CD4-positive, alpha-beta T cell (primary cell): ENCODE measurements at regions of chr11 and their contacts with region 1.

Region 1: DNA sequence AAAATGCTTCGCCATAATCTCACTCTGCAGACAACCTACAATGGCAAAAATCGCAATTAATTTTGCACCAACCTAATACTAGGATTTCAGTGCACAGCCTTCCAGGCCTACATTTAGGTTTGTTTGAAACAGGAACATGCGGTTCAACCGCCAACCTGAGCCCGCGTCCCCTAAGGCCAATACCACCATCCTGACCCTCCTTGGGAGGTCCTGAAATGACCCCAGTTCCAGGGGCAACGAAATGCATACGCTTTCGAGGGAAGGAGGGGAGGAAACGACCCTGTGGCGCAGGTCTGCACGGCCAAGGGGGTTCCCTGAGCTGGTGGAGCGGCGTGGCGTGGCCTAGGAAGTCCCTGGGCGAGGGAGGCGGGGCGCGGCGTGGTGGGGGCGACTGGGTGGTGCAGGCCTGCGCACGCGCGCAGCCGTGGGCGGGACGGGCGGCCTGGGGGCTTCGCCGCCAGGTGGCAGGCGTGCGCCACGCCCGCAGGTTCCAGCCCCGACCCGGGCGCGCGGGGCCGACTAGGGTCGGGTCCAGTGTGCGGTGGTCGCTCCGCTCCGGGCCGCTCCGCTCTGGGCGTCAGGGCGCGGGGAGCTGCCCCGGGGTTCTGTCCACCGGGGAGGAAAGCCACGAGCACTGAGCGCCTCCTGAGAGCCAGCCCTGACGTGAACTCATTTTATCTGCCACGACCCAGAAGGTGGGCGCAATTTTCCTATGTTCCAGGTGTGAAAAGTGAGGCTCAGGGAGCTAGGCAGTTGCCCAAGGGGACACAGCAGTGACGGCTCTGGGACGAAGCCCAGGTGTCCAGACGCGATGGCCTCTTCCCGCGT is 94.1 kb downstream of the SWAP70 start:
- DNase-seq: peak; percentile 83 to 97 (median 89)
- ATAC-seq: peak; percentile 81
- H3K4me3 ChIP-seq: peak overlapping the region; percentile 75
- H3K4me3 Mint-ChIP-seq: peak overlapping the region; percentile 88
- H3K27ac ChIP-seq: no peak overlapping the region
- H3K27ac Mint-ChIP-seq: peak overlapping the region; percentile 79
- H3K4me1 ChIP-seq: peaks cover 21% of the 10 kb centered on the region
- H3K4me1 Mint-ChIP-seq: peaks cover 17% of the 10 kb centered on the region
- H3K27me3 ChIP-seq: no peaks in the 10 kb centered on the region
- H3K27me3 Mint-ChIP-seq: no peaks in the 10 kb centered on the region
- CTCF ChIP-seq: peak; percentile 62

Region 2: GRCh38 chr11:9629064-9629463 is 129.0 kb before region 1 on chr11:
- CTCF ChIA-PET with region 1: no interaction called
- POLR2A ChIA-PET with region 1: no interaction called
- intact Hi-C with region 1: no loop called
- DNase-seq: no peak
- ATAC-seq: no peak
- H3K4me3 ChIP-seq: no peak overlapping the region
- H3K4me3 Mint-ChIP-seq: no peak overlapping the region
- H3K27ac ChIP-seq: no peak overlapping the region
- H3K27ac Mint-ChIP-seq: no peak overlapping the region
- H3K4me1 ChIP-seq: no peaks in the 10 kb centered on the region
- H3K4me1 Mint-ChIP-seq: no peaks in the 10 kb centered on the region
- H3K27me3 ChIP-seq: no peaks in the 10 kb centered on the region
- H3K27me3 Mint-ChIP-seq: no peaks in the 10 kb centered on the region
- CTCF ChIP-seq: no peak

Region 3: DNA sequence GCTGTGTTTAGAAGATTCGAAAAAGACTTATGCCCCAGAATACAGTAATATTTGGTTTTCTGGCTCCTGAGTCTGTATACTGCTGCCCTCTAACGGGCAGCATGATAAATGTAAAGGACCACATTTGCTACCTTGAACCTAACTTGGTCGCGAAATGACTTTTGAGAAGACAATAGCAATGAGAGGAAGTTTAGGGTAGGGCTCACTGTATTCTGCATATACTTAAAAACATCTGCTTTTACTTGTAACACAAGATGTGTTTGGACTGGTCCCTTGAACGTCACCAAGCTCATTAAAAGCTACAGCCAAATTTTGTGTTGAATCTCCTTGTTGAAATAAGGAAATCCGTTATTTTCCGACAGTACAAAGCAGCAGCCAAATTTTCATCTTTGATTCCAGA is 215.0 kb after region 1 on chr11:
- CTCF ChIA-PET with region 1: interaction called, 6 read pairs
- POLR2A ChIA-PET with region 1: no interaction called
- intact Hi-C with region 1: loop called in 1 of 2 experiments (anchors 2 kb)
- DNase-seq: peak in 6 of 14 experiments; percentile 2 to 51 (median 30)
- ATAC-seq: no peak
- H3K4me3 ChIP-seq: no peak overlapping the region
- H3K4me3 Mint-ChIP-seq: no peak overlapping the region
- H3K27ac ChIP-seq: no peak overlapping the region
- H3K27ac Mint-ChIP-seq: no peak overlapping the region
- H3K4me1 ChIP-seq: no peaks in the 10 kb centered on the region
- H3K4me1 Mint-ChIP-seq: no peaks in the 10 kb centered on the region
- H3K27me3 ChIP-seq: no peaks in the 10 kb centered on the region
- H3K27me3 Mint-ChIP-seq: no peaks in the 10 kb centered on the region
- CTCF ChIP-seq: peak; percentile 46

Region 4: GRCh38 chr11:10208131-10208575 is 450.1 kb after region 1 on chr11:
- CTCF ChIA-PET with region 1: no interaction called
- POLR2A ChIA-PET with region 1: no interaction called
- intact Hi-C with region 1: loop called (anchors 5 to 10 kb)
- DNase-seq: peak in 3 of 14 experiments; percentile 57 to 71 (median 70)
- ATAC-seq: peak; percentile 66
- H3K4me3 ChIP-seq: no peak overlapping the region
- H3K4me3 Mint-ChIP-seq: no peak overlapping the region
- H3K27ac ChIP-seq: no peak overlapping the region
- H3K27ac Mint-ChIP-seq: no peak overlapping the region
- H3K4me1 ChIP-seq: no peaks in the 10 kb centered on the region
- H3K4me1 Mint-ChIP-seq: no peaks in the 10 kb centered on the region
- H3K27me3 ChIP-seq: no peaks in the 10 kb centered on the region
- H3K27me3 Mint-ChIP-seq: no peaks in the 10 kb centered on the region
- CTCF ChIP-seq: peak; percentile 77